ENCODE measurements at regions of chr17 and their contacts with region 1.

Region 1: DNA sequence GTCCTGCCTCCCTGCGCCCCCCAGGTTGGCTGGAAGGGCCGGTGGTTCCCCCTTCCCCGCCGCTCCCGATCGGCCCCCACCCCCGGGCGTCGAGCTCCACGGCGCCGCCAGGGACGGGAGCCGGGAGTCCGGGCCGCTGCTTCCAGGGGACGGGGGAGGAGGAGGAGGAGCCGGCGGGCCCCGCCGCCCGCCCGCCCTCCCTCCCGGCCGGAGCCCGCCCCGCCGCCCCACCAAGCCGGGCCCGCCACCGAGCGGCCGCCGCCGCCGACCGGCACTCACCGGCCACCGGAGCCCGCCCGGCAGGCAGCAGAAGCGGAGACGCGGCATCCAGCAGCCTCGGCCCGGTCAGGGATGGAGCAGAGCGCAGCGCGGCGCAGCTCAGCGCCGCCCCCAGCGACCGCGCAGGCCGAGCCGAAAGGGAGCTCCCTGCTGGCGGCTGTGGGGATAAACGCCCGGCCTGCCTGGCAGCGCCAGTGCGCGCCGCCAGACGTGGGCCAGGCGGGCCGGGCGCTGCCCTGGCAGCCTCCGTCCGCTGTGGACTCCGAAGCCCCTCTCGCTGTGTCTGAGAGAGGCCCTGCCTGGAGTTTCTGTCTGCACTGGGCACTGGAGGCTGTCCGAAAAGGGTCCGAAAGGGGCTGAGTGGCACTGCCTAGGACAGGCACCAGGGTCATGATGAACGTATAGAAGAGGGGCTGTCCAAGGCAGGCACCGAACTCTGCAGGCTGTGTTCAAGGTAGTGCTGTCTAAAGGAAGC is at the start of gene MYO18A:
- DNase-seq: peak; percentile 84
- ATAC-seq: peak; percentile 94
- H3K4me3 Mint-ChIP-seq: peak within 1 kb of the TSS; percentile 33
- H3K27ac Mint-ChIP-seq: no peak within 1 kb of the TSS
- H3K4me1 Mint-ChIP-seq: peaks cover 34% of the 10 kb centered on the region
- H3K27me3 Mint-ChIP-seq: peaks cover 6% of the 10 kb centered on the region
- total RNA-seq, gene MYO18A: 67.7 to 85.8 TPM

Region 2: GRCh38 chr17:29140051-29140621 is 40.1 kb before region 1 on chr17:
- CTCF ChIA-PET with region 1: interaction called, 541 read pairs
- DNase-seq: peak; percentile 98
- ATAC-seq: peak; percentile 74
- H3K4me3 Mint-ChIP-seq: peak overlapping the region; percentile 97
- H3K27ac Mint-ChIP-seq: peak overlapping the region; percentile 92
- H3K4me1 Mint-ChIP-seq: peaks cover 75% of the 10 kb centered on the region
- H3K27me3 Mint-ChIP-seq: no peaks in the 10 kb centered on the region

Region 3: GRCh38 chr17:29195465-29196081 is 15.4 kb after region 1 on chr17:
- CTCF ChIA-PET with region 1: interaction called, 22 read pairs
- DNase-seq: no peak
- ATAC-seq: no peak
- H3K4me3 Mint-ChIP-seq: no peak overlapping the region
- H3K27ac Mint-ChIP-seq: no peak overlapping the region
- H3K4me1 Mint-ChIP-seq: peaks cover 3% of the 10 kb centered on the region
- H3K27me3 Mint-ChIP-seq: peaks cover 22% of the 10 kb centered on the region

Region 4: DNA sequence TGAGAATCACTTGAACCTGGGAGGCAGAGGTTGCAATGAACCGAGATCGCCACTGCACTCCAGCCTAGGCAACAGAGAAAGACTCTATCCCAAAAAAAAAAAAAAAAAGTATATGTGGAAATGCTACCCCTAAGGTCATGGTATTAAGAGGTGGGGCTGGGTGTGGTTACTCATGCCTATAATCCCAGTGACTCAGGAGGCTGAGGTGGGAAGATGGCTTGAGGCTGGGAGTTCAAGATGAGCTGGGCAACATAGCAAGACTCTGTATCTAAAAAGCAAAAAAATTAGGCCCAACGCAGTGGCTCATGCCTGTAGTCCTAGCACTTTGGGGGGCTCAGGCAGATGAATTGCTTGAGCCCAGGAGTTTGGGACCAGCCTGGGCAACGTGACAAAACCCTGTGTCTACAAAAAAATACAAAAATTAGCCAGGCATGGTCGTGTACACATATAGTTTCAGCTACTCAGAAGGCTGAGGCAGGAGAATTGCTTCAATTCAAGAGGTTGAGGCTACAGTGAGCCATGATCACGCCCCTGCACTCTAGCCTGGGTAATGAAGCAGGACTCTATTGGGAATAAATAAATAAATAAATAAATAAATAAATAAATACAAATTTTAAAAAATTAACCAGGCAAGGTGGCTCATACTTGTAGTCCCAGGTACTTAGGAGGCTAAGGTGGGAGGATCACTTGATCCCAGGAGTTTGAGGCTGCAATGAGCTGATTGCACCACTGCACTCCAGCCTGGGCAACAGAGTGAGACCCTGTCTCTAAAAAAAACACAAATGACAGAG is 146.0 kb after region 1 on chr17:
- CTCF ChIA-PET with region 1: no interaction called
- DNase-seq: no peak
- ATAC-seq: no peak
- H3K4me3 Mint-ChIP-seq: no peak overlapping the region
- H3K27ac Mint-ChIP-seq: no peak overlapping the region
- H3K4me1 Mint-ChIP-seq: no peaks in the 10 kb centered on the region
- H3K27me3 Mint-ChIP-seq: no peaks in the 10 kb centered on the region